ENCODE measurements at regions of chr7 and their contacts with region 1.

Region 1: DNA sequence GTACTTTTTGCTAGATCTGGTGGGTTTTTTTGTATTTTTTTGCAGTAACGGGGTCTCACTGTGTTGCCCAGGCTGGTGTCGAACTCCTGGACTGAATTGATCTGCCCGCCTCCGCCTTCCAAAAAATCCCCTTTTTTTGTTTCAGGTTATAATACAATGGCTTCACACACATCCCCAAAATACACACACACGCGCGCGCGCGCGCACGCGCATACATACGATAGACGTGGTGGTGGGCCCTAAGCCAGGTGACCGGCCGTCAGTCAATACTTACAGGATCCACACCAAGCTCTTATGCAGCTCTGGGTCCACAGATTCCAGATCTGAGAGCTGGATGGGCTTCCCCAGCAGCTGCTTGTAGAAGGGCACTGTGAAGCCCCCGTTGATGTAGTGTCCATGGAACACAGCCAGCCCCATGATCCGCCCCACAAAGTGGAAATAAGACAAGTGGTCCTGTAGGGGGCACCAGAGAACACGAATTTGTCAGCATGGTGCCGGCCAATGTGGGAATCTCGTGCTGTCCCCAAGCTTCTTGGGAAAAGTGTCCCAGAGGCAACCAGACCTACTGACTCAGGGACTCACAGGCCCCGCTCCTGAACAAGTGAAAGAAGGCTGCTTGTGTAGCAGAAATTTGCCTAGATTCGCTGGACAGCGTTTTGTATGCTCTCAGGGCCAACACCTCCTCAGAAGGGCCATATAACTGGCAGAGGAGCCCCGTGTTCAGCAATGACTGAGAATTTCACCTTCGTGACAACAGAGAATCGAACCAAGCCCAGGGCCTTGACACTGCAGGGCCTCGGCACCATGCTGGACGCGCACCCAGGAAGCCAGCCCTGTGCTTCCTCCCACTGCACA is 103.6 kb downstream of the SMURF1 start:
- DNase-seq: peak; percentile 86
- H3K4me3 Mint-ChIP-seq: no peak overlapping the region
- H3K27ac Mint-ChIP-seq: no peak overlapping the region
- H3K4me1 Mint-ChIP-seq: no peaks in the 10 kb centered on the region
- H3K27me3 Mint-ChIP-seq: no peaks in the 10 kb centered on the region

Region 2: GRCh38 chr7:99312316-99313203 is 272.2 kb after region 1 on chr7:
- intact Hi-C with region 1: loop called (anchors 1 kb)
- DNase-seq: peak; percentile 92
- H3K4me3 Mint-ChIP-seq: no peak overlapping the region
- H3K27ac Mint-ChIP-seq: no peak overlapping the region
- H3K4me1 Mint-ChIP-seq: peaks cover 10% of the 10 kb centered on the region
- H3K27me3 Mint-ChIP-seq: no peaks in the 10 kb centered on the region

Region 3: DNA sequence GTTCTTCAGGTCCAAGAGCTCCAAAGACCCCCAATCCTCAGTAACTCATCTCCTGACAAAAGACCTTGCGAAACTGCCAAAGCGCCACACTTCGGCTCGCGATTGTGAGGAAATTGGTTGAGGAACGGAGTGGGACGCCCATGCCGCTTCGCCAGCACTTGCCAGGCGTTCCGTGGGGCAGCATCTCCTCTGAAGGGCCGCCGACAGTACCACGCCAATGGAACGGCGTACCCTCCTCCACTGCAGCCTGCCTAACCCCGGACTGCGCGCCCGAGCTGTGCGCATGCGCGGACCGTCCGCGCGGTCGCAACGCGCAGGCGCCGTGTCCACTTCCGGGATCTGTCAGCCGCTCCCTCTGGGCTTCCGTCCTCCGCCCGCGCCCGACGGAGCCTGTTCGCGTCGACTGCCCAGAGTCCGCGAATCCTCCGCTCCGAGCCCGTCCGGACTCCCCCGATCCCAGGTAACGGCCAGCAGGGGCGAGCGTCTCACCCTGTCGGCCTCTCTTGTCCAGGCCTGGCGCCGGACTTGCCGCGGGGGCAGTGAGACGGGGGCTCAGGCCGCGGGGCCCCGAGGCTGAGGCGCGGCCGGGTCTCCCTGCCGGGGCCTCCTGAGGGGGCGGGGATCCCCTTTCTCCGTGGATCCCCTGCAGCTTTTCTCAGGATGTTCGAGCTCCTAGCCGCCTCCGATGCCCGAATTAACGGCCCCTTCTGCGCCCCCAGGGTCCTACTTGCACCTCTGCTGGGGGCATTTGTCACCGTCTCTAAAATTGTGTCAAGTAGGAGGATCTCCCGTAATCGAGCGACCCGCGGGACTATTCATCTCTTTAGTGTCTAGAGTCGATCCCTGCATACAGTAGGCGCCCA is 285.4 kb after region 1 on chr7 and contains the start of gene ARPC1A:
- intact Hi-C with region 1: no loop called
- DNase-seq: peak; percentile 98
- H3K4me3 Mint-ChIP-seq: peak within 1 kb of the TSS; percentile 91
- H3K27ac Mint-ChIP-seq: peak within 1 kb of the TSS; percentile 90
- H3K4me1 Mint-ChIP-seq: peaks cover 35% of the 10 kb centered on the region
- H3K27me3 Mint-ChIP-seq: peaks cover 3% of the 10 kb centered on the region
- total RNA-seq, gene ARPC1A: 76.0 and 80.8 TPM in 2 replicates

Measured in activated CD4-positive, alpha-beta T cell treated with anti-CD3 and anti-CD28 coated beads, Interleukin-2, amount 10 ng/mL, durations not matched to agents 24 days and 14 days (primary cell).